ENCODE measurements at regions of chr3 and their contacts with region 1.

Region 1: GRCh38 chr3:73192035-73192738 is 130.7 kb downstream of the EBLN2 start:
- DNase-seq: peak; percentile 67
- ATAC-seq: peak; percentile 99
- H3K4me3 Mint-ChIP-seq: no peak overlapping the region
- H3K27ac Mint-ChIP-seq: no peak overlapping the region
- H3K4me1 Mint-ChIP-seq: peaks cover 6% of the 10 kb centered on the region; the same call in 1 of the 2 replicates
- H3K27me3 Mint-ChIP-seq: no peaks in the 10 kb centered on the region
- CTCF ChIP-seq: peak; percentile 42

Region 2: DNA sequence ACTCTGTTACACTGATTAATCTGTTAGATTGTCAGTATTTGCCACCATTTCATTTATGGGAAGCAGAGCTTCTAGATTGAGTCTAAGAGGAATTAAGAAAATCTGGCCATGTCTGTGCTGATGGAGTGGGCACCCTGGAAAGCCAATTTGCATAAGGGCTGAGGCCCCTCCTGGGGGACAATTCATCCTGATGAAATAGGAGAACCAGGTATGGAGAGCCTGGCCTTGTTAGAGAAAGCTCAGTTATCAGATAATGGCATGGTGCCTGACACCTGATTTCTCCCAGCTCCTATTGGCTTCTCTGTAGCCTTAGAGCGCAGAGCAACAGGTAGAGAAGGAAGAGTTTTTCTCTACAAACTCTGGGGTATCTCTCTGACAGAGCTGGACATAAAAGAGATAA is 16.5 kb before region 1 on chr3:
- CTCF ChIA-PET with region 1: interaction called, 15 read pairs
- POLR2A ChIA-PET with region 1: no interaction called
- DNase-seq: no peak
- ATAC-seq: peak; percentile 93
- H3K4me3 Mint-ChIP-seq: no peak overlapping the region
- H3K27ac Mint-ChIP-seq: no peak overlapping the region
- H3K4me1 Mint-ChIP-seq: peaks cover 13% of the 10 kb centered on the region
- H3K27me3 Mint-ChIP-seq: no peaks in the 10 kb centered on the region
- CTCF ChIP-seq: no peak

Region 3: DNA sequence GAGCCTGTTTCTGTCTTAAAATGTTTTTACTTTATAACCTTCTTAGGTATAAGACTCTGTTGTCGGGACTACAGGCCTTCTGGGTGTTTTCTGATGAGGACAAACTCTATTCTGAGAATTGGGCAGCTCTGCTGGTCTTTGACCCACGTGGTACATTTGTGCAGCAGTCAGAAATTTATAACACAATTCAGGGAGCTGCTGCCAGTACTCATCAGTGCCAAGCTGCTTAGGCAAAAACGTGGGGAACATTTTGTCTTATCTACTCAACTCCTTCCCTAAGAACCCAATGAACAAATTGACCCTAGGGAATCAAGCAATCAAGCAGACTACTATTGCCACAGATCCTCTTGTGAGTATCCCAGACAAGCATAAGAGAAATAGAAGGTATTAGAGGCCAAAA is 613.2 kb after region 1 on chr3:
- CTCF ChIA-PET with region 1: no interaction called
- POLR2A ChIA-PET with region 1: interaction called, 13 read pairs
- DNase-seq: no peak
- ATAC-seq: no peak
- H3K4me3 Mint-ChIP-seq: no peak overlapping the region
- H3K27ac Mint-ChIP-seq: no peak overlapping the region
- H3K4me1 Mint-ChIP-seq: peaks cover 5% of the 10 kb centered on the region; the same call in 1 of the 2 replicates
- H3K27me3 Mint-ChIP-seq: no peaks in the 10 kb centered on the region
- CTCF ChIP-seq: no peak

Measured in WTC11 (cell line).